ENCODE measurements at regions of chr11 and their contacts with region 1.

Region 1: GRCh38 chr11:34192481-34193401 is 87.3 kb downstream of the NAT10 start:
- DNase-seq: peak; percentile 90 to 91
- ATAC-seq: peak; percentile 86
- H3K4me3 ChIP-seq: no peak overlapping the region
- H3K27ac ChIP-seq: peak overlapping the region; percentile 53 to 81
- H3K4me1 ChIP-seq: no peaks in the 10 kb centered on the region
- H3K27me3 ChIP-seq: no peaks in the 10 kb centered on the region

Region 2: GRCh38 chr11:34104680-34105078 is 88.1 kb before region 1 on chr11:
- intact Hi-C with region 1: no loop called
- DNase-seq: no peak
- ATAC-seq: no peak
- H3K4me3 ChIP-seq: peak overlapping the region; percentile 21 to 27
- H3K27ac ChIP-seq: peak overlapping the region; percentile 59 to 62
- H3K4me1 ChIP-seq: no peaks in the 10 kb centered on the region
- H3K27me3 ChIP-seq: no peaks in the 10 kb centered on the region

Region 3: GRCh38 chr11:34223021-34223813 is 30.5 kb after region 1 on chr11:
- intact Hi-C with region 1: loop called in 1 of 2 experiments (anchors 2 kb)
- DNase-seq: peak; percentile 87 to 91
- ATAC-seq: peak; percentile 86
- H3K4me3 ChIP-seq: no peak overlapping the region
- H3K27ac ChIP-seq: peak overlapping the region in 1 of 2 donors; percentile 66
- H3K4me1 ChIP-seq: no peaks in the 10 kb centered on the region
- H3K27me3 ChIP-seq: no peaks in the 10 kb centered on the region

Region 4: GRCh38 chr11:34250732-34251639 is 58.2 kb after region 1 on chr11:
- intact Hi-C with region 1: loop called in 1 of 2 experiments (anchors 2 kb)
- DNase-seq: peak; percentile 84 to 85
- ATAC-seq: peak; percentile 78
- H3K4me3 ChIP-seq: no peak overlapping the region
- H3K27ac ChIP-seq: peak overlapping the region in 1 of 2 donors; percentile 85
- H3K4me1 ChIP-seq: peaks cover 2 to 3% of the 10 kb centered on the region in 2 donors
- H3K27me3 ChIP-seq: no peaks in the 10 kb centered on the region

Region 5: DNA sequence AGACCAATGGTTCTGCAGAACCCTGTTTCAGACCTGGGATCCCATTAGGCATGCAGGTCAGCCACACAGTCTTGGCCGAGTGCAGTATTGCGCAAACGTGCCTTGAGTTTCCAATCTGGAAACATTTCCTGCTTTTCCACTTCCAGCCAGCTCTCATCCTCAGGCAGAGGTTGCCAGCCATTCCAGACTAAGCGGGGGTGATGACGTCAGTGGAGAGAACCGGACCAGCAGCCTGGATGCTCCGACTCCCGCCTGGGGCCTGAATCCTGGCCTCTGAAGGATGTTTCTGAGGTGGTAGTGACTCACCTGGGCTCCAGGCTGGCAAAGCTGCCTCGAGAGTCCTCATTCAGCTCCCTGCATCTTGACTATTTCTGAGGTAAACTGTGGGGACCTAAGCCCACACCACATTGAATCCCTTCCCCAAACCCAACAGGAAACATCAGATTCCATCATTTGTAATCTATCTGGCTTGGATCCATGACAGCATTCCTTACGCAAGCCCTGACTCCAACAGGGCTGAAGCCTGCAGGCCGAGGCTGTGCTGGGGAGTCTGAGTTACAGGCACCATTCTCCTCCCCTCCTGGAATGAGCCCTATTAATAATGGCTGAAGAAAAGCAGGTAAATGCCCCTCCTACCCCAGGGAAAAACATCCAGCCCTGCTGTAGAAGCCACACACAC is 82.1 kb after region 1 on chr11:
- intact Hi-C with region 1: loop called in 1 of 2 experiments (anchors 2 kb)
- DNase-seq: peak; percentile 92 to 93
- ATAC-seq: peak; percentile 91
- H3K4me3 ChIP-seq: no peak overlapping the region
- H3K27ac ChIP-seq: peak overlapping the region in 1 of 2 donors; percentile 65
- H3K4me1 ChIP-seq: no peaks in the 10 kb centered on the region
- H3K27me3 ChIP-seq: no peaks in the 10 kb centered on the region